ENCODE measurements at regions of chr14 and their contacts with region 1.

Region 1: GRCh38 chr14:49461529-49462401 is 124.4 kb downstream of the RPS29 start:
- DNase-seq: peak; percentile 73
- ATAC-seq: peak; percentile 98
- H3K4me3 Mint-ChIP-seq: no peak overlapping the region
- H3K27ac Mint-ChIP-seq: no peak overlapping the region
- H3K4me1 Mint-ChIP-seq: no peaks in the 10 kb centered on the region
- H3K27me3 Mint-ChIP-seq: no peaks in the 10 kb centered on the region

Region 2: GRCh38 chr14:49438256-49438770 is 23.5 kb before region 1 on chr14:
- CTCF ChIA-PET with region 1: interaction called, 12 read pairs
- POLR2A ChIA-PET with region 1: no interaction called
- intact Hi-C with region 1: no loop called
- DNase-seq: no peak
- ATAC-seq: no peak
- H3K4me3 Mint-ChIP-seq: no peak overlapping the region
- H3K27ac Mint-ChIP-seq: no peak overlapping the region
- H3K4me1 Mint-ChIP-seq: no peaks in the 10 kb centered on the region
- H3K27me3 Mint-ChIP-seq: peaks cover 12% of the 10 kb centered on the region

Region 3: DNA sequence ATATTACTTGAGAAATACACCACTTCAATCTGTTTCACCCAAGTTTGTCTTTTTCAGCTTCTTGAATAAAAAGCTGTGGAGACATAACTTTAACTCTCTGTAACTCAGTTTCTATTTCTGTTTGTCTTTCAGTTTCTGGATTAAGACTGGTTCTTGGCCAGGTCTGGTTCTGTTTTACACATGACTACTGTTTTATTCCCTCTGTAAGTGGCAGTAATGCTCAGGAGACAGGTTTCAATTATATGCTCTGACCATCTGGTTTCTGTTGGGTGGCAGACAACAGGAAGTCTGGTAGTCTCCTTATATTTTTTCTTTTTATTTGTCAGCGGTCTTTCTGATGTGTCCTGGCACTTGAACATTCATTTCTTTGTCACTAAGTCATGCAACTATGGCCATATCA is 21.5 kb after region 1 on chr14:
- CTCF ChIA-PET with region 1: interaction called, 19 read pairs
- POLR2A ChIA-PET with region 1: interaction called, 3 read pairs
- intact Hi-C with region 1: no loop called
- DNase-seq: no peak
- ATAC-seq: peak; percentile 85
- H3K4me3 Mint-ChIP-seq: no peak overlapping the region
- H3K27ac Mint-ChIP-seq: peak overlapping the region; percentile 13
- H3K4me1 Mint-ChIP-seq: peaks cover 7% of the 10 kb centered on the region
- H3K27me3 Mint-ChIP-seq: peaks cover 3% of the 10 kb centered on the region

Region 4: DNA sequence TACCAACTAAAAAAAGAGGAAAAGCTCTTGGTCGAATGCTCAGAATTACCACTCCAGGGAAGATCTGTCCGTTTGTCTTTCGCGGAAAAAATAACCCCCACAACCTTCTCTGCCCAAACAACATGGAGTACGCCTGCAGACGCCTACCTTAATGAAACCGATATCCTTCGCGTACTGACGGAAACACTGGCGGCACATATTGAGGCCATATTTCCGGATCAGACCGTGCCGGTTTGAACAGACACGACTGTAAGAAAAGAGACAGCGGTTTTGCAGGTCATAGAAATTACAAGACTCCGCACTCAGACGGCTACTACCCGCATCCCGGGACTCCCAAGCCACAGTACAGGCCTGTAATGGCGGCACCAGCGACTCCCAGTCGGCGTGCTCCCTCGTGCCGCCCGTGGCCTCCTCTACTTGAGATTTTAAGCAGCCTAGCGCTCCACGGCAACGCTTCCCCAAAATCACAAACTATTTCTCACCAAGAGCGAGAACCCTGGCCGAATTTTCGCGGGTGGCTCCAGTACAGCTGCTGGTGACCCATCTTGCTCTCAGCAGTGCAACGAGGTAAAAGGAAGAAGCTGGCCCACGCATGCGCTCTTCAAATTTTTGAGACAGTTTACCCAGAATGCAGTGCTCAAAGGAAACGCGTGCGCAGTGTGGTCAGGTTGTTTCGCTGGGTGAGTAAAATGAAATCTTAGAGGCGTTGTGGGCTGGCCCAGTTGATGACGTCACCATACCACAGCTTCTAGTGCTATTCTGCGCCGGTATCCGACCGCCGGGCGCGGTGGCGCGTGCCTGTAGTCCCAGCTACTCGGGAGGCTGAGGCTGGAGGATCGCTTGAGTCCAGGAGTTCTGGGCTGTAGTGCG is 124.3 kb after region 1 on chr14 and contains the start of gene RPS29:
- CTCF ChIA-PET with region 1: interaction called, 24 read pairs
- POLR2A ChIA-PET with region 1: no interaction called
- intact Hi-C with region 1: loop called (anchors 2 to 10 kb)
- DNase-seq: peak; percentile 99
- ATAC-seq: peak; percentile 84
- H3K4me3 Mint-ChIP-seq: peak within 1 kb of the TSS; percentile 92
- H3K27ac Mint-ChIP-seq: peak within 1 kb of the TSS; percentile 96
- H3K4me1 Mint-ChIP-seq: peaks cover 40% of the 10 kb centered on the region
- H3K27me3 Mint-ChIP-seq: no peaks in the 10 kb centered on the region
- total RNA-seq, gene RPS29: 481 to 1,987 TPM

Region 5: DNA sequence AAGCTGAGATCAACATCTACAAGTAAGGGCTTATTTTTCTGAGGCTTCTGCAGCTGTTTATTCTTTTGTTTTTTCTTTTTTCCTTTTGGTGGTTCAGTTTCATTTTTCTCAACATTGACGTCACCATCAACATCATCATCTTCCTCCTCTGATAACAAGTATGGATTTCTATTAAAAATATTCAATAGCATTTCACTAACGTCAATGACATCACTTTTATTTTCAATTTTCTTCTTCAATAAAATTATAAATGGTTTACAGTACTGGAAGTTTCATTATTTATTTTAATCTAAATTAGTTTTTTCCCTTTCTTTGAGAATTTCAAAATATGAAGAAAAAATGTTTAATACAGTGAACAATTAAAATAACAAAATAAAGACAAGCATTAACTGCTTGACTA is 366.9 kb after region 1 on chr14:
- CTCF ChIA-PET with region 1: interaction called, 3 read pairs
- POLR2A ChIA-PET with region 1: no interaction called
- intact Hi-C with region 1: loop called in 1 of 2 experiments (anchors 10 kb)
- DNase-seq: no peak
- ATAC-seq: no peak
- H3K4me3 Mint-ChIP-seq: no peak overlapping the region
- H3K27ac Mint-ChIP-seq: no peak overlapping the region
- H3K4me1 Mint-ChIP-seq: no peaks in the 10 kb centered on the region
- H3K27me3 Mint-ChIP-seq: no peaks in the 10 kb centered on the region

Region 6: GRCh38 chr14:50285861-50286260 is 824.1 kb after region 1 on chr14:
- CTCF ChIA-PET with region 1: no interaction called
- POLR2A ChIA-PET with region 1: no interaction called
- intact Hi-C with region 1: no loop called
- DNase-seq: no peak
- ATAC-seq: no peak
- H3K4me3 Mint-ChIP-seq: no peak overlapping the region
- H3K27ac Mint-ChIP-seq: no peak overlapping the region
- H3K4me1 Mint-ChIP-seq: no peaks in the 10 kb centered on the region
- H3K27me3 Mint-ChIP-seq: no peaks in the 10 kb centered on the region

Measured in activated CD4-positive, alpha-beta T cell treated with anti-CD3 and anti-CD28 coated beads for 36 hours (primary cell).